ENCODE measurements at regions of chr16 and their contacts with region 1.

Region 1: GRCh38 chr16:46929378-46930332 is 43.8 kb downstream of the DNAJA2 start:
- DNase-seq: peak; percentile 75
- ATAC-seq: peak; percentile 88
- H3K4me3 Mint-ChIP-seq: no peak overlapping the region
- H3K27ac Mint-ChIP-seq: no peak overlapping the region
- H3K4me1 Mint-ChIP-seq: peaks cover 5% of the 10 kb centered on the region
- H3K27me3 Mint-ChIP-seq: no peaks in the 10 kb centered on the region

Region 2: DNA sequence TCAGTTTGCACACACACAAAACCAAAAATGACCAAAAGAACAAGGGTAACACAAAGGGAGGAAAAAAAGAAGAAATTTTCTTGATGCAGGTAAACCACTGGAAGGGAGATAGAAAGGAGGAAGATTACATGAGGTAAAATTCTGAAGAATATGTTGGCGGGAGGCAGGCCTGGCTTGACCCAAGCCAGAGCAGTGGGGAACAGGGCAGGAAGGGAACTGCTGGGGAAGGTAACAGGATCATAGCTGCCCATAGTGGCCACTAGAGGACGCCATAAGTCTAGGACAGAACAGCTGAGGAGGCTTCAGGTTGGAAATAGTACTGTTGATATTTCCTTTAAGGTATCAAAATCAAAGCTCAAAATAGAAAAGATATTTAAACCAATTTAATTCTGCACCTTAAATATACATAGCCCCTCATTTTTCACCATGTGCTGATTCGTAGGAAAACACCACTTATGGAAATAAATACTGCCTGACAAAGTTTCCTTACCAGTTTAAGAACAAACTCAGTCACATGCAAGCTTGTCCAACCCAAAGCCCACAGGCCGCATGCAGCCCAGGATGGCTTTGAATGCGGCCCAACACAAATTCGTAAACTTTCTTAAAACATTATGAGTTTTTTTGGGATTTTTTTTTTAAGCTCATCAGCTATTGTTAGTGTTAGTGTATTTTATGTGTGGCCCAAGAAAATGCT is 256.2 kb before region 1 on chr16:
- CTCF ChIA-PET with region 1: interaction called, 11 read pairs
- DNase-seq: peak; percentile 66
- ATAC-seq: peak; percentile 97
- H3K4me3 Mint-ChIP-seq: no peak overlapping the region
- H3K27ac Mint-ChIP-seq: no peak overlapping the region
- H3K4me1 Mint-ChIP-seq: no peaks in the 10 kb centered on the region
- H3K27me3 Mint-ChIP-seq: no peaks in the 10 kb centered on the region

Region 3: DNA sequence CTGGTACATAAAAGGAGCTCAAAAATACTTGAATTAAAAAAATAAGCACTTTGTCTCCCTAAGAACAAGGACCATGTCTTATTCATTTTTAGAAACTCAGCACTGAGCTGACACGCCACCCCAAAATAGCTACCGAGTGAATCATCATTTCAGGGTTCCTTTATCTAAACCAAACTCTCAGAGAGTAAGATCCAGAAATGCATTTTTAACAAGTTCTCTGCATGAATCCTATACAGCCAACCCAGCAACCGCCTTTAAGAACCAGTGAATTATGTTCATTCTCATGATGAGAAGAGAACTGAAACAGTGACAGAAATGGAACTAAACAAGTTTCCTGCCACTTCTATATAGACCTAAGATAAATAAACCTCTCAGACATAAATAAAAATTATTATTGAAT is 107.4 kb before region 1 on chr16:
- CTCF ChIA-PET with region 1: no interaction called
- DNase-seq: peak; percentile 63
- ATAC-seq: peak; percentile 83
- H3K4me3 Mint-ChIP-seq: no peak overlapping the region
- H3K27ac Mint-ChIP-seq: no peak overlapping the region
- H3K4me1 Mint-ChIP-seq: peaks cover 30% of the 10 kb centered on the region
- H3K27me3 Mint-ChIP-seq: no peaks in the 10 kb centered on the region

Region 4: DNA sequence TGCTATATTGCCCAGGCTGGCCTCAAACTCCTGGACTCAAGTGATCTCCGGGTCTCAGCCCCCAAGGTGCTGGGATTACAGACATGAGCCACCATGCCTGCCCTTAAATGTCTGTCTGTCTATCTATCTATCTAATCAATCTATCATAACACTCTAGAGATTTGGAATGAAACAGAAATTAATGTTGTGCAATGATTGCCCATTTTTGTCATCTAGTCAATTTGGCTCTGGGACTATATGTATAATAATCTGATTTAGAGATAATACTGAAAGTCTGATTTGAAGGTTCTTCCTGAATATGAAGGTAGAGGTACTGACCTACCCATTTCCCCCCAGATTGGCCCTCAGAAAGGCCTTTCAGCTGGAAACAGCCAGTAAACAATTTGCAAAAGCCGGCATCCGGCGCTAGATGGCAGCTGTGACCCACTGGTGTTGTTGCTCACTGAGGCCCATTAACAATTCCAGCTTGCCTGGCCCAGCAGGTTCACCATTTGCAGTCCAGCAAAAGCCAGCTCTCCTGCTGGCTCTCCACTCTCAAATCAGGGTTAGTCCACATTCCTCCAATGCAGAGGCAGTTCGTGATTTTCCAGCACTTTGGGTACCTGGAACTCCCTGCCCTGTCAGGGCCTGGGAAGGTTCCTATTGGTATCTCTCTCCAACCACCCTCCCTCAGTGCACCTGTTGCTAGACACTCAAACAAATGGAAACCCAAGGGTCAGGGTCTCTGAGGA is 75.8 kb before region 1 on chr16:
- CTCF ChIA-PET with region 1: interaction called, 43 read pairs
- DNase-seq: peak; percentile 79
- ATAC-seq: peak; percentile 76
- H3K4me3 Mint-ChIP-seq: no peak overlapping the region
- H3K27ac Mint-ChIP-seq: no peak overlapping the region
- H3K4me1 Mint-ChIP-seq: no peaks in the 10 kb centered on the region
- H3K27me3 Mint-ChIP-seq: peaks cover 5% of the 10 kb centered on the region

Region 5: DNA sequence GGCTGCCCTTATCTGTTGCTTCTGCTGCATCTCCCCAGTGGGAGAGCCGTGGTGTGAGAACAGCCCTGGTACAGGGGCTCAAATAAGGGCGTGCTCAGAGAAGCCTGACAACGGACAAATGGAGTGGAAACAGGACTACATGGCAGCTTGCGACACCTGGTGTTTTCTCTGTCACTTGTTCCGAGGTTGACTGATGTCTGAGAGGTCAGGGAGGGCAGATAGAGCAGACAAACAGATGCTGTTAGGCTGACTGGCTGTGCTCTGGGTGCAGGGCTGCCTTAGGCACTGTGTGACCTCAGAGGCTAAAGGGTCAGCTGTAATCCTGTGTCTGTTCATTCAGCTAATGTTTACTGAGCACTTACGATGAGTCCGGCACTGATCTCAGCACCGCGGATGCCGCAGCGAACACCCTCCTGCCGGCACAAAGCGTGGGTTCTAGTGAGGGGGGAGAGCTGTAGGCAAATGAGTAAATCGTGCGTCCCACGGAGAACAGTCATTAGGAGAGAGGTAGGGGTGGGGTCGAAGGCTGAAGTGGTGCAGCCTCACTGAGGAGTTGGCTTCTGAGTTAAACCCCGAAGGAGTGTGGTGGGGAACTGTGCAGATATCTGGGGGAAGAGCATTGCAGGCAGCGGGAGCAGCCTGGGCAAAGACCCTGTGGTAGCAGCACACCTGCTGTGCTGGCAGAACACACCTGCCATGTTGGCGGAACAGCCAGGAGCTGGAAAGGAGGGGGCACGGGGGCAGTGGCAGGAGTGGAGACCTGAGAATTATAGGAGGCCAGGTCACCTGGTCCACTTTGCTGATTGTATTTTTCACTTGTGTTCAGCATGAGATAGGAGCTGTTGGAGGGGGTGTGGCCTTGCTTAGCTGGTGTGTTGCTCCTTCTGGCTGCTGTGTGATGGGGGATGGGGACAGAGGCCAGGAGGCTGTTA is 10.5 kb before region 1 on chr16:
- CTCF ChIA-PET with region 1: interaction called, 13 read pairs
- DNase-seq: no peak
- ATAC-seq: no peak
- H3K4me3 Mint-ChIP-seq: no peak overlapping the region
- H3K27ac Mint-ChIP-seq: no peak overlapping the region
- H3K4me1 Mint-ChIP-seq: no peaks in the 10 kb centered on the region
- H3K27me3 Mint-ChIP-seq: no peaks in the 10 kb centered on the region

Measured in activated CD8-positive, alpha-beta memory T cell treated with anti-CD3 and anti-CD28 coated beads, Interleukin-2, amount 10 ng/mL, durations not matched to agents 7 days and 5 days (primary cell).